ENCODE measurements at regions of chr1 and their contacts with region 1.

Region 1: GRCh38 chr1:67760030-67760821 is 73.0 kb downstream of the GNG12 start:
- DNase-seq: no peak
- ATAC-seq: peak; percentile 72

Region 2: DNA sequence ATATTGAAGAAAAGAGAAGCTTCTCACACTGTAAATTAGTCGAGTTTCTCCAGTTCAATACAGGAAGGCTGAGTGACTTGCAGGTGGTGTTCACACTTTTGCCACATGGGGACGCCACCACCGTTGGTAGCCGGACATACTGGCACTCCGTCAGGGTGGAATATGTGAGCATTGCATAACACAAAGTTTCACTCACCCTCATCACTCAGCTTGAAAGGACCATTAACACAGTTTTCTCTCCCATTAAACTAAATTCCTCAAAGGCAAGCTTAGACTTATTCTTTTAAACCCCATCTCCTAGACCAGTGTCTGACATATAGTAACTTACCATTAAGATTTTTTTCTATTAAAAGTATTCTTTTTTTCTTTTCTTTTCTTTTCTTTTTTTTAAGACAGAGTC is 224.8 kb before region 1 on chr1:
- intact Hi-C with region 1: loop called (anchors 1 kb)
- DNase-seq: peak; percentile 74
- ATAC-seq: peak; percentile 69

Region 3: DNA sequence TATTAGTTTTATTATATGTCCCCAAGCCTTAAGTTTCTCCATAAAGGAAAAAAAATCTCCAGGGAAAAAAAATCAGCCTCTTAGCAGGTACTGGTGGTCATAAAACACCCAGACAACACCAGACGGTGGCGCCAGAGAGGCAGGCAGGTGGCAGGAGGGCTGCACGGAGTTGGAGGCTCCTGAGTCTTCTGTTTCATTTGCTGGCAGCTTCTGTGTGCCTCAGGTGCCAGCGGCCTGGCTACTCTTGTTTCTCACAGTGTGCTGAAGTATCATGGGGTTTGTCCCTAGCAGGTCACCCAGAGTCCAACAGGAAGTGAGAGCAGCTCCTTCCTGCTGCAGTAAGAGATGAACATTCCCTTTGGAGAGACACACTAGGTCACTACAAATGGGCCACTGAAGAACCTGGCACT is 198.5 kb before region 1 on chr1:
- intact Hi-C with region 1: loop called (anchors 1 kb)
- DNase-seq: peak; percentile 94
- ATAC-seq: peak; percentile 93

Region 4: GRCh38 chr1:67652800-67653199 is 107.4 kb before region 1 on chr1:
- intact Hi-C with region 1: no loop called
- DNase-seq: no peak
- ATAC-seq: no peak

Region 5: DNA sequence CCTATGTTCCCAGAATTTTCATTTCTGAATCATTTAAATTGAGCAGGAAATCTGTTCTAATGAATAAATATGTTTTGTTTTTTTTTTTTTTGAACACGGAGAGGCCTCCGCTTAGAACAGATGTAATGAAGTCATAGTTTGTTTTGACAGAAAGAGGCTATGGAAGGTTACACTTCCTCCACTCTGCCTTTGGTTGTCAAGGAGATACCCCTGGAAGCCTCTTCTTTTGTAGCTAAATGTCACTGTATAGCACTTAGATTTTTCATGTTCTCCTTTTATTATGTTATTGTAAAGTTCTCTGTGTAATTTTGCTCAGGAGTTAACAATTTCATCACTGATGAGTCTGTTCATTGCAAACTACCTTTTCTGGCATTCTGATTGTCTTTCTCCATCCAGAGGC is 95.7 kb after region 1 on chr1:
- intact Hi-C with region 1: no loop called
- DNase-seq: no peak
- ATAC-seq: no peak

Region 6: DNA sequence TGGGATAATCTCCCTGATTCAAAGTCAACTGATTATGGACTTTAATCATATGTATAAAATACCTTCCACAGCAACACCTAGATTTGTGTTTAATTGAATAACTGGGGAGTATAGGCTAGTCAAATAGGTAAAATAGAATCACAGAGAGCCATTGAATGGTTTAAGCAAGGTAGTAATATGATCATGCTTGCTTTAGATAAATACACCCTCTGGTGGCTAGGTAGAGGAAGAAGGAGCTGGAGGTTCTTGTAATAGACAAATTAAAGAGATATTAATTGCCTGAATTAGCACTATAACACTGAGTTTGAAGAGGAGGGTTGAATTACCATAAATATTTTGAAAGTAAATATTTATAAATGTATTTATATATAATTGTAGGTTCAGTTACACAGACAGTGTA is 249.9 kb after region 1 on chr1:
- intact Hi-C with region 1: loop called (anchors 10 kb)
- DNase-seq: no peak
- ATAC-seq: no peak

Region 7: GRCh38 chr1:68346188-68346808 is 586.1 kb after region 1 on chr1:
- intact Hi-C with region 1: loop called (anchors 10 kb)
- DNase-seq: no peak
- ATAC-seq: no peak